Caco-2 (cell line): ENCODE measurements at regions of chr7 and their contacts with region 1.

Region 1: DNA sequence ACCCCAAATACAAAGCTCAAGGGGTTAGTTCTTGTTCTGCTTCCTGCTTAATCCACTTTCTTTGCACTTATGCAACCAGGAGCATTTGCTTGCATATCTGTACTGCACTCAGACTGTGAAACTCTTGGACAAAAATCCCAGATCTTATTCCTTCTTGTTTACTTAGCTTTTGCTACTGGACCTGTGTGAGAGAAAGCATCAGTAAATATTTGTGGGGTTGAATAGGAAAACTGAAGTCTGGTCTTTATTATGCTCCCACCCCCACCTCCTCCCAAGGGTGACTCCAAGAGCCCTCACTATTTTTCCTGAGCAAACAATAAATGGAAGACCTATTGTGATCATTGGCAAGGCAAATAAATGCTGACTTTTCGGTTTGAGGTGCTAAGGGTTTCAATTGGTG is 57.1 kb upstream of the VSTM2A start:
- DNase-seq: no peak
- H3K4me3 ChIP-seq: no peak overlapping the region
- H3K4me3 Mint-ChIP-seq: no peak overlapping the region
- H3K27ac Mint-ChIP-seq: no peak overlapping the region
- H3K4me1 ChIP-seq: no peaks in the 10 kb centered on the region
- H3K4me1 Mint-ChIP-seq: no peaks in the 10 kb centered on the region
- H3K27me3 ChIP-seq: no peaks in the 10 kb centered on the region
- H3K27me3 Mint-ChIP-seq: peaks cover 7% of the 10 kb centered on the region
- CTCF ChIP-seq: no peak

Region 2: DNA sequence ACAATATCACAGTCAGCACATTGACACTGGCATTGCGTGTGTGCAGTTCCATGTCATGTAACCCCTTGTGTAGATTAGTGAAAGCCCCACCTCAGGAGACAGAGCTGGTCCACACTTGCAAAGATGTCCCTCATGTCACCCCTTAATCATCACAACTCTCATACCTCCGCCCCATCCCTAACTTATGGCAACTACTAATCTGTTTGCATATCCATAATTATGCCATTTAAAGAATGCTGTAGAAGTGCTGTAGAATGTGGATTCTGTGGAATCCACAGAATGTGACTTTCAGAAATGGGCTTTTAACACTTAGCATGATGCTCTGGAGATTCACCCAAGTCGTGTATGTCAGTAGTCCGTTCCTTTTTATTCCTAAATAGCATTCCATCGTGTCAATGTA is 45.7 kb before region 1 on chr7:
- CTCF ChIA-PET with region 1: no interaction called
- POLR2A ChIA-PET with region 1: no interaction called
- intact Hi-C with region 1: loop called (anchors 10 kb)
- DNase-seq: no peak
- H3K4me3 ChIP-seq: no peak overlapping the region
- H3K4me3 Mint-ChIP-seq: no peak overlapping the region
- H3K27ac Mint-ChIP-seq: no peak overlapping the region
- H3K4me1 ChIP-seq: no peaks in the 10 kb centered on the region
- H3K4me1 Mint-ChIP-seq: no peaks in the 10 kb centered on the region
- H3K27me3 ChIP-seq: no peaks in the 10 kb centered on the region
- H3K27me3 Mint-ChIP-seq: peaks cover 7% of the 10 kb centered on the region
- CTCF ChIP-seq: no peak